CD8-positive, alpha-beta memory T cell (primary cell): ENCODE measurements at regions of chr10 and their contacts with region 1.

Region 1: DNA sequence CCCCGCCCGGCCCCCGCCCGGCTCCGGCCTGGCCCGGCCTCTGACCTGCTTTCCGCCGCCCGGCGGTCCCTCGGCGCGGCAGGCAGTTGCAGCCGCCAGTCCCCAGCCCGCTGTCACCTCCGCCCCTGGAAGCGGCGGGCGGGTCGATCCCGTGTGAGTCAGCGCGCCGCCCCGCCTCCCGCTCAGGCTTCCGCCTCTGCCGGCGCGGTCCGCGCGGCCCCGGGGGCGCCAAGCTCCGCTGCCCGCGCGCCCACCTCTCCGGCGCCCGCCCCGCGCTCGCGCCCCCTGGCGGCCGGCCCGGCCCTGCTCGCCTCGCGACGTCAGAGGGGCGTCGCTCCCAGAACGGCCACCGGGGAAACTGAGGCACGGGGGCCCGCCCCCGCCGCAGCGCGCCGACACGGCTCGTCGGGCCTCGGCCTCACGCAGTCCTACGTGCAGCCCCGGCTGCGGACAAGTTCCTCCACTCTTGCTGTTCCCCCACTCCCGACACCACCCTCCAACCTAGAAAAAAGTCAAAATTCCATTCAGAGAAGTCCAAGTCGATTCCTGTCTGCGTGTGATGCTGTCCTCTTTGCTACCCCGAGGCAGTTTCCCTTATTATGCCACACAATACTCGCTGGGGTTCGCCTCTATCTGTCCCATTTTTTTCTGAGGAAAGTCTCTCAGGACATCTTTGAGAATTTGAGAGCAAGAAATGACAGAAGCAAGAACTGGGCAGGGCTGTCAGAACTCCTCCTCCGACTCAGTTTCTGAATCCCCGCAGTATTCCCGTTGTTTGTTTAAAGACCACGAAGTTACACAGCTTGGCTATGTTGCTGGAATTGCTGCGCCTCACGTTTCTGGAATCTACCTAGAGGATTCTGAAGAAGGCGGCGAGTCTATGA is at the start of gene DNMBP:
- DNase-seq: peak; percentile 72 to 88 (median 81)
- H3K4me3 ChIP-seq: peak within 1 kb of the TSS; percentile 85
- H3K4me3 Mint-ChIP-seq: peak within 1 kb of the TSS; percentile 86 to 99 (median 91)
- H3K27ac ChIP-seq: peak within 1 kb of the TSS; percentile 33
- H3K27ac Mint-ChIP-seq: peak within 1 kb of the TSS; percentile 47 to 93 (median 81)
- H3K4me1 ChIP-seq: peaks cover 13% of the 10 kb centered on the region
- H3K4me1 Mint-ChIP-seq: peaks cover 33 to 47% (median 33%) of the 10 kb centered on the region in 3 donors
- H3K27me3 ChIP-seq: no peaks in the 10 kb centered on the region
- H3K27me3 Mint-ChIP-seq: no peaks in the 10 kb centered on the region
- total RNA-seq, gene DNMBP: 2.0 to 2.3 TPM

Region 2: GRCh38 chr10:99983280-99983988 is 26.6 kb before region 1 on chr10:
- CTCF ChIA-PET with region 1: interaction called, 11 read pairs
- POLR2A ChIA-PET with region 1: no interaction called
- DNase-seq: no peak
- H3K4me3 ChIP-seq: no peak overlapping the region
- H3K4me3 Mint-ChIP-seq: no peak overlapping the region
- H3K27ac ChIP-seq: peak overlapping the region; percentile 51
- H3K27ac Mint-ChIP-seq: no peak overlapping the region
- H3K4me1 ChIP-seq: no peaks in the 10 kb centered on the region
- H3K4me1 Mint-ChIP-seq: peaks cover 3 to 11% (median 4%) of the 10 kb centered on the region in 3 donors
- H3K27me3 ChIP-seq: no peaks in the 10 kb centered on the region
- H3K27me3 Mint-ChIP-seq: no peaks in the 10 kb centered on the region

Region 3: DNA sequence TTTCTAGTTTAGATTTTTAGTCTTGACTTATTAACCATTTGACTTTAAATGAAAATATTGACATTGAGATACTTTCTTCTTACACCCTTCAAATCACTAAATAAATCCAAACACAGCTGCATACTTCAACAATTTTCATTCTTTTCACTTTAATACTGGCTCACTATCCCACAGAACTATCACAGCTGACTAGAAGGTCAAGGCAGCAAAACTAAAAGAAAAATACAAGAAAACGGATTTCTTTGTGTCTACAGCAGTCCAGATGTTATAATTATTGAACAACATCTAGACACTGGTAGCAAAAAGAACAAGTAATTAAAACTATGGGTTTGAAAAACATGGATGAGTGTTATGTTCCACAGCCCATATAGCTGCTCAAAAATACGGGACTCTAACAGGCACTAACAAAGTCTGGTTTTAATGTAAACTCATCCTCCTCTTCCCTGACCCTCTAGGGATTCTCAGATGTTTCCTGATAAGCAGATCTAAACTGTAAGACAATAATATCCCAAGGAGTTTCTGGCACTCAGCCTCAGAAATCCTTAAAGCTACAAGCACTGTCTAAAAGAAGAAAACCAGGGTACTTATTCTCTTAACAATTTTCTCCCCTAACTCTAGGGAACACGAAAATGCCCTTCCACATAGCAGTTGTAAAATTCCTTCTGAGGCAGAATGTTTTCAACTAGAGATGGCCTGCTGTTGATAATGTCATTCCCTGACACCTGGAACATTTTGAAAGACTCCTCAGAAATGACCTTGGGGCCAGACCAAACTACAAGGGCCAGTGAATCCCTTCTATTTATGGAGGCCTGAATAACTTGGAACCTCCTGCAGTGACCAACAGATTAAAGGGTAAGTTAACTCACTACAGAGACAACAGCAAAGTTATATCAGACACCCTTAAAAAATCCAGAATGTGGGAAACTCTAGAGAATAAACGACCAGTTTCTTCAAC is 13.1 kb before region 1 on chr10:
- CTCF ChIA-PET with region 1: interaction called, 13 read pairs
- POLR2A ChIA-PET with region 1: no interaction called
- DNase-seq: no peak
- H3K4me3 ChIP-seq: no peak overlapping the region
- H3K4me3 Mint-ChIP-seq: no peak overlapping the region
- H3K27ac ChIP-seq: no peak overlapping the region
- H3K27ac Mint-ChIP-seq: peak overlapping the region in 1 of 8 donors; percentile 41
- H3K4me1 ChIP-seq: peaks cover 13% of the 10 kb centered on the region
- H3K4me1 Mint-ChIP-seq: peaks cover 13 to 18% (median 18%) of the 10 kb centered on the region in 3 donors
- H3K27me3 ChIP-seq: no peaks in the 10 kb centered on the region
- H3K27me3 Mint-ChIP-seq: peaks cover 0 to 1% of the 10 kb centered on the region in 2 donors

Region 4: GRCh38 chr10:100046021-100046486 is 36.0 kb after region 1 on chr10:
- CTCF ChIA-PET with region 1: interaction called, 10 read pairs
- POLR2A ChIA-PET with region 1: no interaction called
- DNase-seq: peak; percentile 52 to 83 (median 68)
- H3K4me3 ChIP-seq: no peak overlapping the region
- H3K4me3 Mint-ChIP-seq: peak overlapping the region in 1 of 7 donors; percentile 18
- H3K27ac ChIP-seq: no peak overlapping the region
- H3K27ac Mint-ChIP-seq: no peak overlapping the region
- H3K4me1 ChIP-seq: no peaks in the 10 kb centered on the region
- H3K4me1 Mint-ChIP-seq: no peaks in the 10 kb centered on the region
- H3K27me3 ChIP-seq: no peaks in the 10 kb centered on the region
- H3K27me3 Mint-ChIP-seq: peaks cover 1 to 16% of the 10 kb centered on the region in 2 donors

Region 5: DNA sequence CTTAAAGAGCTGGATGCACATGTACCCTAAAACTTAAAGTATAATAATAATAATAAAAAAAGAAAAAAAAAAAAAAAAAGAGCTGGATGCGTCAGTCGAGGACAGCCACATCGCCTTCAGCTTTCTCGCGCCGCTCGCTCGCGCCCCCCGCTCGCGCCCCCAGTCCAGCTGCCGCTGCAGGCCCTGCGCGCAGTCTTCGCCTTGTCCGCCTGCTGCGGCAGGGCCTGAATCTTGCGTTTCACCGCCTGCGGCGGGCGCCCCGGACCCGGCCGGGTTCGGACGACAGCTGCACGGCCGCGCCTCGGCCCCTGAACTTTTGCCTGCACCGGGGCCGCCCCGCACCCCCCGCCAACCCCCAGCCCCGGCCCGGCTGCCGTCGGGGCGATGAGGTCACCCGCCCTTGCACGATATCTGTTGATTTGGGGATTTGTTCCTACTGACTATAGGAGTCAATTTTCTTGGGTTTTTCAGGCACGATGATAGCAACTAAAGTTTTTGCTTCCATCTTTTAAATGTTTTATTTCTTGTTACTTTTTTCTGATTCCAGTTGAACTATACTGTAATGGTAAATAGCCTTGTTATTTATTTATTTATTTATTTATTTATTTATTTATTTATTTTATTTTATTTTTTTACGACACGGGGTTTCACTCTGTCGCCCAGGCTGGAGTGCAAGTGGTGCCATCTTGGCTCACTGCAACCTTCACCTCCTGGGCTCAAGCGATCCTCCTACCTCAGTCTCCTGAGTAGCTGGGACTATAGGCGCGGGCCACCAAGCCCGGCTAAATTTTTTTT is 105.1 kb after region 1 on chr10:
- CTCF ChIA-PET with region 1: no interaction called
- POLR2A ChIA-PET with region 1: no interaction called
- DNase-seq: no peak
- H3K4me3 ChIP-seq: no peak overlapping the region
- H3K4me3 Mint-ChIP-seq: no peak overlapping the region
- H3K27ac ChIP-seq: no peak overlapping the region
- H3K27ac Mint-ChIP-seq: no peak overlapping the region
- H3K4me1 ChIP-seq: no peaks in the 10 kb centered on the region
- H3K4me1 Mint-ChIP-seq: peaks cover 0 to 6% (median 3%) of the 10 kb centered on the region in 3 donors
- H3K27me3 ChIP-seq: no peaks in the 10 kb centered on the region
- H3K27me3 Mint-ChIP-seq: peaks cover 20 to 28% of the 10 kb centered on the region in 2 donors